Activated CD8-positive, alpha-beta T cell treated with anti-CD3 and anti-CD28 coated beads for 36 hours (primary cell): ENCODE measurements at regions of chr9 and their contacts with region 1.

Region 1: GRCh38 chr9:2053883-2054845 is 39.0 kb downstream of the SMARCA2 start:
- DNase-seq: peak; percentile 85
- ATAC-seq: peak; percentile 97
- H3K4me3 Mint-ChIP-seq: peak overlapping the region; percentile 49
- H3K27ac Mint-ChIP-seq: peak overlapping the region; percentile 88
- H3K4me1 Mint-ChIP-seq: peaks cover 44% of the 10 kb centered on the region
- H3K27me3 Mint-ChIP-seq: no peaks in the 10 kb centered on the region
- CTCF ChIP-seq: no peak

Region 2: DNA sequence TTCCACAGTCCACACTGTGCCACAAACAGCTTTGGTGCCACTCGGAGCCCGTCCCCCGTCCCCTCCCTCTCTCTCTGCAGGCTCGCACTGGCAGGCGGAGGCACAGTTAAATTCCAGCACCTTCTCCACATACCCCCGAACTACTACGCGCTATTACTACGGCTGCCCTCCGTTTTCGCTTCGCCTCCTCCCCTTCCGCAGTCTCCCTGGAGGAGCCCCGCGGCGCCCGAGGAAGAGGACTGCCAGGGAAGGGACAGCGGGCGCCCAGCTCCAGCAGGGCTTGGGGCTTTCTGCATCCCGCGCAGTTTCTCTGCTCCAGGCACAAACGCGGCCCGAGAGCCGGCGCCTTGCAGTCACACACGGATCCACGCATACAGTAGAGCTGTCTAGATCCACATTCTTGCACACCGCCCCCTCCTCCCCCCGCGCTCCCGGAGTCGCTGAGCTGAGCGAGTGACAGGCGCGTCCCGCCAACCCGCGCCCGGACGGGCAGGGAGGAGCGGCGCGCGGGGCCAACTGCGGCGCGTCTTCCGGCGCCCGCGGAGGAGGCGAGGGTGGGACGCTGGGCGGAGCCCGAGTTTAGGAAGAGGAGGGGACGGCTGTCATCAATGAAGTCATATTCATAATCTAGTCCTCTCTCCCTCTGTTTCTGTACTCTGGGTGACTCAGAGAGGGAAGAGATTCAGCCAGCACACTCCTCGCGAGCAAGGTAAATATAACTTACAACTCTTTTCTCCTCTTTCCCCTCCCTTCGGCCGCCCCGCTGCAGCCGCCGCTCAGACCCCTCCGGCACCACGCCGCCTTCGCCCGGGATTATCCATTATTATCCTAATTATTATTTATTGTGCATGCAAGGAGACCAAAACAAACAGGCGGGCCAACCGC is 39.2 kb before region 1 on chr9 and contains the start of gene SMARCA2:
- CTCF ChIA-PET with region 1: interaction called, 10 read pairs
- POLR2A ChIA-PET with region 1: interaction called, 21 read pairs
- intact Hi-C with region 1: loop called (anchors 2 kb)
- DNase-seq: peak; percentile 98
- ATAC-seq: peak; percentile 88
- H3K4me3 Mint-ChIP-seq: peak within 1 kb of the TSS; percentile 89
- H3K27ac Mint-ChIP-seq: peak within 1 kb of the TSS; percentile 99
- H3K4me1 Mint-ChIP-seq: peaks cover 42% of the 10 kb centered on the region
- H3K27me3 Mint-ChIP-seq: no peaks in the 10 kb centered on the region
- CTCF ChIP-seq: no peak
- total RNA-seq, gene SMARCA2: 94.7 to 99.4 TPM

Region 3: DNA sequence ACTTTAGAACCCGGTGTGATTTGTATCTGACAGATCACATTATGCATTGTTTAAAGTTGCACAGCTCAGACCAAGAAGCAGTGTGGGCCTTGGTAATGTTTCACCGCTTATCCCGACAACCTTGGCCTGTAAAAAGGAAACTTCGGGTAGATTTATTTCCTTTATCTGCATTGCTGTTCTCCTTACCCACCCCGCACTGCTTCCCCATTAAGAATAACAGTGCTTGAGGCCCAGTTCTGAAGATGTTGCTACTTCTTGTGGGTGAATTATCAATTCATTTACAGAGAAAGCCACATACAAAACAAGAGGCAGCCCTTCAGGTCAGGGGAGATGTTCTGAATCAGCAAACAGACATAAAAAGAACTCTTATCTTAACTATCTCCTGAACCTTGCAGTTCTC is 30.6 kb before region 1 on chr9:
- CTCF ChIA-PET with region 1: interaction called, 11 read pairs
- POLR2A ChIA-PET with region 1: interaction called, 16 read pairs
- intact Hi-C with region 1: loop called (anchors 2 kb)
- DNase-seq: peak; percentile 28
- ATAC-seq: peak; percentile 27
- H3K4me3 Mint-ChIP-seq: peak overlapping the region; percentile 63
- H3K27ac Mint-ChIP-seq: peak overlapping the region; percentile 82
- H3K4me1 Mint-ChIP-seq: peaks cover 89% of the 10 kb centered on the region
- H3K27me3 Mint-ChIP-seq: no peaks in the 10 kb centered on the region
- CTCF ChIP-seq: no peak

Region 4: DNA sequence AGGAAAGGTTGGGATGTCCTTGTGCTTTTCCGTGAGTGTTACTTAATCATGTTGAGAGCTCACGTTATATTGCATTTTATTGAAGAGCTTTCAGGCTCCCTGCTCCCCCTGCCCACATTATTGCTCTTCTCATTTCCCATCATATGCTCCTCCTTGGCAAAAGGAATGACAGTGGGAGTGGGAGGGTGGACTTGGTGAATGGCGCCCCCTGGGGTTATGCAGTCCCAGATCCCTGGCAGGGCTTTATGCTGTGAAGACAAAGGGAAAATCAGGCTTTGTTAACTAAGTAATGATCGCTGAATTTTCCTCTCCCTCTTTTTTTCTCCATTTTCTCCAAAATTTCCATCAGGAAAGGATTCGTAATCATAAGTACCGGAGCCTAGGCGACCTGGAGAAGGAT is 127.6 kb after region 1 on chr9:
- CTCF ChIA-PET with region 1: no interaction called
- POLR2A ChIA-PET with region 1: no interaction called
- intact Hi-C with region 1: no loop called
- DNase-seq: peak; percentile 30
- ATAC-seq: no peak
- H3K4me3 Mint-ChIP-seq: no peak overlapping the region
- H3K27ac Mint-ChIP-seq: no peak overlapping the region
- H3K4me1 Mint-ChIP-seq: peaks cover 9% of the 10 kb centered on the region
- H3K27me3 Mint-ChIP-seq: no peaks in the 10 kb centered on the region
- CTCF ChIP-seq: peak; percentile 43

Region 5: GRCh38 chr9:2228132-2228531 is 174.0 kb after region 1 on chr9:
- CTCF ChIA-PET with region 1: no interaction called
- POLR2A ChIA-PET with region 1: no interaction called
- intact Hi-C with region 1: no loop called
- DNase-seq: peak; percentile 64
- ATAC-seq: no peak
- H3K4me3 Mint-ChIP-seq: no peak overlapping the region
- H3K27ac Mint-ChIP-seq: no peak overlapping the region
- H3K4me1 Mint-ChIP-seq: no peaks in the 10 kb centered on the region
- H3K27me3 Mint-ChIP-seq: no peaks in the 10 kb centered on the region
- CTCF ChIP-seq: peak; percentile 47